ENCODE measurements at regions of chr15 and their contacts with region 1.

Region 1: DNA sequence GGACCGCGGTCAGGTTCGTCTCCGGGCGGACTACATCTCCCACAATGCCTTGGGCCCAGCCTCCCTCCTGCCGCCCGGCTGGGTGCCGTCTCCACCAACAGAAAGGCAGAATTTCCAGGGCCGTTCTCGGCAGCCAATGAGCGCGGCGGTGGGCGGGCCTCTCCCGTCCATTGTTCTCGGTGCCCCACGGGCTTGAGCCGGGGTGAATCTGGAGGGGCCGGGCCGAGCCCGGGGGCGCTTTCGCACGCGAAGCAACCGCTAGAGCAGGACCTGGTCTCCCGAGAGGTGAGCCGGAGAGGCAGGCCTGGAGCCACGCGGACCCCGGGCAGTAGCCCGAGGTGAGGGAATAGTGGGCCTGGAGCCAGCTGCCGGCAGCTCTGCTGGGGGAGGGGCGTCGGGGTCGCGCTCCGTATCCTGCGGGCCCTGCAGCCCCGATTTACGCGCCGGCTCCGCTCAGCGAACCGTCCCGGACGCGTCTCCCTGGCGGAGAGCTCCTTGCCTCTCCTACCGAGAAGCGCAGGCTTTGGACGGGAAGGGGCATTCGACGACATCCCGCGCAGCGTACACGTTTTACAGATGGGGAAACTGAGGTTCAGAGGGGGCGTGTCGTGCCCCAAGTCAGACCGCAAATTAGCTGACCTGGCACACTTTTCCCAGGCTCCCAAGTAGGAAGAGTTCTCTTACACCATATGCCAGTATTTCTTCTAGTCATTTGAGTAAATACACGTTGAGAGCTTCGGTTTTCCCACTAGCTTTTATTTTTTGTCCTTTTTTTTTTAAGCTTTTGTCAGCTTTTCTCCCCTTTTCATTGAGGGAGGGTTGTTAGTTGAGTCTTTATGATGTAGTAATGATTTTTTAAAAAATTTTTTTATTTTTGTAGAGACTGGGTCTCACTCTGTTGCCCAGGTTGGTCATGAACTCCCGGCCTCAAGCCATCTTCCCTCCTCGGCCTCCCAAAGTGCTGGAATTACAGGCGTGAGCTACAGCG is at the start of gene ZSCAN2:
- DNase-seq: peak; percentile 38
- H3K4me3 ChIP-seq: peak within 1 kb of the TSS; percentile 97
- CTCF ChIP-seq: no peak

Region 2: GRCh38 chr15:84588053-84588874 is 12.9 kb before region 1 on chr15:
- CTCF ChIA-PET with region 1: interaction called, 91 read pairs
- POLR2A ChIA-PET with region 1: no interaction called
- DNase-seq: no peak
- H3K4me3 ChIP-seq: peak overlapping the region; percentile 44
- CTCF ChIP-seq: peak; percentile 82

Region 3: DNA sequence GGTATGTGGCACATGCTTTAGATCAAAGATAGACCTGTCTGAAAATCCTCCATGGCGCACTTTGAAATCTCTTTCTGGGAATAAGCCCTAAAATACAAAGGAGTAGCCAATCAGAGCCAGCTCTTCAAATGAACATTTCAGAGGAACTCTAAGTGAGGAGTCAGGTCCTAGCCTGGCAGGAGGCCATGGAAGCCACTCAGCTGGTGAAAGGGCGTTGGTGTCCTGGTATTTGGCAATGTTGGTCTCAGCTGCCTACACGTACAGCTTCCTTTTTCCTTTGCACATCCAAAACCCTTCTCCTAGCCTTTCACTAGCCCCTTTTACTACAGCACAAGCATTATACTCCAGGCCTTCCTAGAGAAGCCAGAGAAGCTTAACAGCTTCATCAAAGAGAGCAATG is 47.4 kb after region 1 on chr15:
- CTCF ChIA-PET with region 1: no interaction called
- POLR2A ChIA-PET with region 1: no interaction called
- DNase-seq: no peak
- H3K4me3 ChIP-seq: no peak overlapping the region
- CTCF ChIP-seq: no peak

Region 4: DNA sequence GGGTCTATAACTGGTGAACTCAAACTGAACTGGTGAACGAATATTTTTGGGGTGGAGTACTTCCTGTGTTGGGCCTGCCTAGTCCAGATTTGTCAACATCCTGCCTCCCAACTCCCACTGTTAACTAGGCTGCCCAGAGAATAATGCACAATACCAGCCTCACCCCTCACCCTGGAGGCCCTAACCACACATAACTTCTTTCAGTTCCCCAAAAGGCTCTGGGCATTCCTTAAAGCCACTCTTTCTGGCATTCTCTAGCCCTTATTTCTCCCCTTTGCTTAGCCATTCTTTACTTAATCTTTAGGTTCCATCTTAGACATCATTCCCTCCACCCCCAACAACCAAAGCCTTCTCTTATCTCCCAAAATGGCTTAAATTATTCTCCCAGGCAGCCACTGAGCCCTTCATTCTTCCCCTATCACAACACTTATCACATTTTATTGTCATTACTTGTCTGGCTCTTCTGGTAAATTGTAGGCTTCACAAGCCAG is 123.9 kb after region 1 on chr15:
- CTCF ChIA-PET with region 1: no interaction called
- POLR2A ChIA-PET with region 1: no interaction called
- DNase-seq: no peak
- H3K4me3 ChIP-seq: no peak overlapping the region
- CTCF ChIP-seq: no peak

Region 5: DNA sequence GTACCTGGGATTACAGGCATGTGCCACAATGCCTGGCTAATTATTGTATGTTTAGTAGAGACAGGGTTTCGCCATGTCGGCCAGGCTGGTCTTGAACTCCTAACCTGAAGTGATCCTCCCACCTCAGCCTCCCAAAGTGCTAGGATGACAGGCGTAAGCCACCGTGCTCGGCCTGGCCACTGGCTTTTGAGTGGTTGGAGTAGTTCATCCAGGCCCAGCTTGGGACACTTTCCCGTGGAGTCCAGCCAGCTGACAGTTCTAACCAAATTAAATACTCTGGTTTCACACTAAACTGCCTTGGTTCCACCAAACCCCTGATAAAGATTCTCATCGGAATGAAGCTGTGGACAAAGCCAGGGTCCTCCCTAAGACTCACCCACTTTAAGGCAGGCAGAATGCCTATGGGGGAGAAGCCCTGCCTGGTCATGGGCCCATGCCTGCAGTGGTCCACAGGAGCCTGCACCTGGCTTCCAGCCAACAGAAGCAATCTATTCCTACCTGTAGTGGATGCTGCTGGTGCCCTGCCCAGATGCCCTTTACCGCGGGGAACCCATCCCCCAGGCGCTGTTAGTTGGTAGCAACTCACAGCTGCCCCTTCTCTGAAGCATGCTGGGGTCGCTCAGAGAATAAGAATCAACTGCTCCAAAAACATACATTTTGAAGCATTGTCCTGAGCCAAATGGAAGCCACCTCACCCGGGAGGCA is 278.1 kb after region 1 on chr15:
- CTCF ChIA-PET with region 1: interaction called, 20 read pairs
- POLR2A ChIA-PET with region 1: no interaction called
- DNase-seq: no peak
- H3K4me3 ChIP-seq: no peak overlapping the region
- CTCF ChIP-seq: no peak

Region 6: GRCh38 chr15:84911879-84912660 is 310.9 kb after region 1 on chr15:
- CTCF ChIA-PET with region 1: interaction called, 10 read pairs
- POLR2A ChIA-PET with region 1: no interaction called
- DNase-seq: peak; percentile 92
- H3K4me3 ChIP-seq: no peak overlapping the region
- CTCF ChIP-seq: no peak